ENCODE measurements at regions of chr3 and their contacts with region 1.

Region 1: DNA sequence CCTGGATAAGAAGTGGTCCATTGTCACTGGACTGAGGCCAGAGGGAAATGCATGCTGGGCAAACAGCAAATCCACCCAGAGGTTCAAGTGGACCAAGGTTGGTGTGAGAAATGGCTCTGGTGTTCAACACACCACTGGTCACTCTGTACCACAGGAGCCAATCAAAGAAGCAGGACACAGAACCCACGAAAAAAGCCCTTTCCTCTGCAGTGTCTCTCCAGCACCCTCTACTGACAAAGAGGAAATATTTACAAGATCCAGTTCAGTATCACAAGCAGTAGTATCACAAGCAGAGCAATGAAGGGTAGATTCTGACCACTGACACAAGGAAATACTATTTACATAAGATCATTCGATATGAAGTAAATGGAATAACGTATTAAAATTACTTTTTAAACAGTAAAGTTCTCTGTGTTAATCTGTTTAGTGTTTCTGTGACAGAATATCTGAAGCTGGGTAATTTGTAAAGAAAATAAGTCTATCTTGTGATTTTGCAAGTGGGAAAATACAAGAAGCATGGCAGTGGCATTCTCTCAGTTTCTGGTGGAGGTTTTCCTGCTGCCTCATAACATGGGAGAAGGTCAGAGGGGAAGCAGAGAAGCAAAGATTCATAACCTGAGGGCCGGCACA is 390.7 kb downstream of the EFHB start:
- DNase-seq: peak; percentile 73
- H3K4me3 ChIP-seq: peak overlapping the region; percentile 5
- H3K27ac ChIP-seq: peak overlapping the region; percentile 95
- H3K4me1 ChIP-seq: peaks cover 56% of the 10 kb centered on the region
- CTCF ChIP-seq: peak; percentile 97

Region 2: DNA sequence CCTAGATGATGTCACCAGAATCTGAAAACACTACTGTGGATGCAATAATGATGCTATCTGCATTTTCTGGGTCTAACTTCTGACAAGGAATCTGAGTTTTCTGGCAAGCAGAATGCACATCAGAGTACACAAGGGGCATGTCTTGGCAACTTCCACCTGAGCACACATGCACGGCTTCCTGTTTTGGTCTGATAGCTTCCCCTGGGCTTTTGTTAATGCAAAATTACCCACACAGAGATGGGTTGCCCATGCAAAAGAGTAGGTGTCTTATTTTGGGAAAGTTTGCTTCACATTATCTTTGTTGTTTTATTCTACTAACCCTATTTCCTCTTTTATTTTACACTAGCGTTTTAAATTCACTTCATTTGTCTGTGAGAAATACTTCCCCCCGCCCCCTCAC is 1044.0 kb before region 1 on chr3:
- CTCF ChIA-PET with region 1: no interaction called
- POLR2A ChIA-PET with region 1: no interaction called
- intact Hi-C with region 1: no loop called
- DNase-seq: peak; percentile 90
- H3K4me3 ChIP-seq: peak overlapping the region; percentile 40
- H3K27ac ChIP-seq: peak overlapping the region; percentile 75
- H3K4me1 ChIP-seq: peaks cover 35% of the 10 kb centered on the region
- CTCF ChIP-seq: no peak

Region 3: DNA sequence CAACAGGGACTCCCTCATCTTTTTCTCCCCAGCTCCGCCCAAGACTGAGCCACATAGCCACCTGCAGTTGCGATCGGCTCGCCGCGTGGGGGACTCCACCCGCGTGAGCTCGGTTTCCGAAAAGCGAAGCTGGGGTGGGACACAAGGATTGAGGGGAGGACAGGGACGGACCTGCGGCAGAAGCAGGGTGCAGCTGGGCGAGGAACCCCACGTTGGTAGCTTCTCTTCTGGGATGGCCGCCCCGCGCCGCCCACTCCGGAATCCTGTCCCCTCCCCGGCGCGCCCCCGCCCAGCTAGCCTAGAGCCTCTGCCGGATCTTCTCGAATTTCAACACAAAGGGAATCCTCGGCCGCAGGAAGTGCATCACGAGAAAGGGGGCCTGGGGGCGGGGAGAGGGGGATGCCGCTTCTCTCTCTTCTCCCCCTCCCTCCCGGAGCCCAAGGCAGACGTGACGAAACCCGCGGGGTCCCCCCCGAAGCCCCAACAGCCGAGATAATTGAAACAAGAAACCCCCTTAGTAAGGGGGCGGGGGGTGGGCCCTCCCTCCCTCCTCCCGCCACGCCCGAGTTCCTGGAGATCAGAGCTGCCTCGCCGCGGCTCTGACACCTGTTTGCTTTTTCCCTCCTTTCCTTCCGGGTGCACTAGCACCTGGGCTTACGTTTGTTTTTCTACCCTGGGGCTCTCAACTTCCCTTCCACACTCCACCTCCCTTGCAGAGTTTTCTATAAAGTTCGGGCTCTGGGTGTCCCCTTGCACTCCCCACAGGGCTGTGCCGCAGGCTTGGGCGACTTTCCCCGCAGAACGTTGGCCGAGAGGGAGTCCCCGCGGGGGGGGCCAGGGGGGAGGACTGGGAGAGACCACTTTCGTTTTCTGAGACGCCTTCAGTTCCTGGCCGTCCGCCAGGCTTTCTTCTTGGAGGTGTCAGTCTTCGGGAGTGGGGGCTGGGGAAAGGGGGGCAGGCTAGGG is 396.4 kb before region 1 on chr3:
- CTCF ChIA-PET with region 1: interaction called, 3 read pairs
- POLR2A ChIA-PET with region 1: interaction called, 6 read pairs
- intact Hi-C with region 1: loop called (anchors 2 kb)
- DNase-seq: peak; percentile 91
- H3K4me3 ChIP-seq: peak overlapping the region; percentile 72
- H3K27ac ChIP-seq: peak overlapping the region; percentile 68
- H3K4me1 ChIP-seq: peaks cover 11% of the 10 kb centered on the region
- CTCF ChIP-seq: peak; percentile 76

Region 4: DNA sequence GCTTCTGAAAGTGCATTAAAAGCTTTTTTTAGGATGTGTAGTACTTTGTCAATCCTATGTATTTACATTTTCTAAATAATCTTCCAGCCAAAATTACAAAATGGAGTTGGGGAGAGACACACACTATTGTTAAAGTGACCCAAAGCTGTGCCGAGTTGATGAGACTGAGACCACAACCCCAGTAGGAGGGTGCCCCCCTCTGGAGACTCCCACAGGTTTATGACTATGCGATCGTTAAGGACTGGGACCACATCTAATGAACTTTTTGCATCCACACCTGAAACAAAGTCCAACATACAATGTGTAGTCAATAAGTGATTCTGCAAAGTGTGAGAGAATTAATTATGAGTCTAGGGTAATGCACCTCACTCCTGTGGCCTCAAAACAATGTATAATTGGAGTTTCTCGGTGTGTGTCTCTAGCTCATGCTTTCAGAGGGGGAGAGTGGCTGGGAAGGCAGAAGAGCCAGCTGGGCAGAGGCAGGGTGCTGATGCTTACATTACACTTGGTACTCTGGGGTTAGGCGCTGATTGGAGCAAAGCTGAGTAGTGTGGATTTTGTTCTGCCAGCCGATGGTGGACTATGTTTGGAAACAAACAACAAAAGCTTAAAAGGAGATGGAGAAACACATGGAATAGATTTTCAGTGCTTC is 292.2 kb before region 1 on chr3:
- CTCF ChIA-PET with region 1: no interaction called
- POLR2A ChIA-PET with region 1: no interaction called
- intact Hi-C with region 1: loop called (anchors 10 kb)
- DNase-seq: peak; percentile 24
- H3K4me3 ChIP-seq: no peak overlapping the region
- H3K27ac ChIP-seq: no peak overlapping the region
- H3K4me1 ChIP-seq: peaks cover 7% of the 10 kb centered on the region
- CTCF ChIP-seq: peak; percentile 69

Region 5: GRCh38 chr3:19485267-19485666 is 58.1 kb before region 1 on chr3:
- CTCF ChIA-PET with region 1: interaction called, 4 read pairs
- POLR2A ChIA-PET with region 1: interaction called, 4 read pairs
- intact Hi-C with region 1: loop called (anchors 5 kb)
- DNase-seq: no peak
- H3K4me3 ChIP-seq: no peak overlapping the region
- H3K27ac ChIP-seq: no peak overlapping the region
- H3K4me1 ChIP-seq: no peaks in the 10 kb centered on the region
- CTCF ChIP-seq: no peak

Region 6: DNA sequence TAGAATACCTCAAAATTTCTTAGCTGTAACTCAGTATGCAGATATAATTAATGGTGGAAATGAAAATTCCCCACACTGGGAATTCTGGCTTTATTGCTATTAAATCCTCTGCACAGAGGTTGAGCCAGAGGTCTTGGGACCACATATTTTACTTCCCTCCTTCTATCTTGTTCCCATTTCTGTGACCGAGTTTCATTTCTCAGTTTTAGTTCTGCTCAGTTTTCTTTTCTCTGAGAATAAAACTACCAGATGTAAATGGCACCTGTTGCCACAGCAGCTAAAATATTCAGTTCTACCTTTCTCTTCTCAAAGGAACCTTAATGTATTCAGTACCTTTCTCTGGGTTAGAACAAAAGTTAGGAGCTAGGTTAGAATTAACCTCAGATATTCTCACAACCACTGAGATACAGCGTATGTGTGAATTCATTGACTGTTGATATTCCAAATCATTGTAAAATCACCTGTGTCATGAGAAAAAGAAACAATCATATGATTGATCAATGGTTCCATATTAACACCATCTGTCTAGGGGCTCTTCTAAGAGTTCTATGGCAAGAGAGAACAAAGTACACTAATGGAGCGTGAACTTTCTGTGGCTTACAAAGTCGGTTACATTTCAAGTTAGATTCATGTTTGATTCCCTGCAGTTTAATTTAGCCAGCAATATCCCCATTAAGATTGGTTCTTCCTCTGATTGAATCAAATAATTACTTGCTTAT is 16.6 kb after region 1 on chr3:
- CTCF ChIA-PET with region 1: interaction called, 7 read pairs
- POLR2A ChIA-PET with region 1: interaction called, 17 read pairs
- intact Hi-C with region 1: loop called (anchors 2 kb)
- DNase-seq: peak; percentile 68
- H3K4me3 ChIP-seq: peak overlapping the region; percentile 37
- H3K27ac ChIP-seq: peak overlapping the region; percentile 81
- H3K4me1 ChIP-seq: peaks cover 23% of the 10 kb centered on the region
- CTCF ChIP-seq: no peak

Region 7: DNA sequence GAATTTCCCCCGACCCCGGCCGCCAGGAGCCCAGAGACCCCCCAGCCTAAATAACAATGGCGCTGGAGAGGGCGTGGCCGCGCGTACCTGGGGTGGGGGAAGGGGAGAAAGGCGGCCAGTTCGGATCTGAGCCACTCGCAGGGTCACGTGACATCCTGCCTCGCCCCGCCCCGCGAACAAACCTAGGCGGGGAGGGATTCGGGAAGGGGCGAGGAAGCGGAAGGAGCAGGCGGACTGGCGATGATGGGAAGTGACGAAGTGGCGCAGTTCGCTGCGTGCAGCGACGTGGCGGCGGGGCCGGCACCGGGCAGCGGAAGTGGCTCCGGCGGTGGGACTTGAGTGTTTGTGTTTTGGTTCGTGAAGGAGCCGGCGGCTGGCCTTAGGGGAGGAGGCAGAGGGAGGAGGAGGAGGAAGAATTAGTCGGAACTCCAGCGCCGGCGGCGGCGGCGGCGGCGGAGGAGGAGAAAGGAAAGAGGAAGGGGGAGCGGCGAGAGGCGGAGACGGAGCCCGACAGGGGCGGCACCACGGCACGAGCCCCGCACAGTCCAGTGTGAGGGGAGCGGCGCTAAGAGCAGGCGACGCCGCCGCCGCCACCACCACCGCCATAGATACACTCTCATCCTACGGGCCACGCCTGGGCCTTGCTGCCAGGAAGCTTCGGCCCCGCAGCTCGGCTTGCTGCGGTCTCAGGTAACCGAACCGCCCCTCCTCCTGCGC is 403.7 kb after region 1 on chr3 and contains the start of gene RAB5A:
- CTCF ChIA-PET with region 1: no interaction called
- POLR2A ChIA-PET with region 1: no interaction called
- intact Hi-C with region 1: loop called (anchors 10 kb)
- DNase-seq: peak; percentile 97
- H3K4me3 ChIP-seq: peak within 1 kb of the TSS; percentile 91
- H3K27ac ChIP-seq: peak within 1 kb of the TSS; percentile 73
- H3K4me1 ChIP-seq: peaks cover 30% of the 10 kb centered on the region
- CTCF ChIP-seq: no peak
- total RNA-seq, gene RAB5A: 24.5 and 26.1 TPM in 2 replicates

Region 8: DNA sequence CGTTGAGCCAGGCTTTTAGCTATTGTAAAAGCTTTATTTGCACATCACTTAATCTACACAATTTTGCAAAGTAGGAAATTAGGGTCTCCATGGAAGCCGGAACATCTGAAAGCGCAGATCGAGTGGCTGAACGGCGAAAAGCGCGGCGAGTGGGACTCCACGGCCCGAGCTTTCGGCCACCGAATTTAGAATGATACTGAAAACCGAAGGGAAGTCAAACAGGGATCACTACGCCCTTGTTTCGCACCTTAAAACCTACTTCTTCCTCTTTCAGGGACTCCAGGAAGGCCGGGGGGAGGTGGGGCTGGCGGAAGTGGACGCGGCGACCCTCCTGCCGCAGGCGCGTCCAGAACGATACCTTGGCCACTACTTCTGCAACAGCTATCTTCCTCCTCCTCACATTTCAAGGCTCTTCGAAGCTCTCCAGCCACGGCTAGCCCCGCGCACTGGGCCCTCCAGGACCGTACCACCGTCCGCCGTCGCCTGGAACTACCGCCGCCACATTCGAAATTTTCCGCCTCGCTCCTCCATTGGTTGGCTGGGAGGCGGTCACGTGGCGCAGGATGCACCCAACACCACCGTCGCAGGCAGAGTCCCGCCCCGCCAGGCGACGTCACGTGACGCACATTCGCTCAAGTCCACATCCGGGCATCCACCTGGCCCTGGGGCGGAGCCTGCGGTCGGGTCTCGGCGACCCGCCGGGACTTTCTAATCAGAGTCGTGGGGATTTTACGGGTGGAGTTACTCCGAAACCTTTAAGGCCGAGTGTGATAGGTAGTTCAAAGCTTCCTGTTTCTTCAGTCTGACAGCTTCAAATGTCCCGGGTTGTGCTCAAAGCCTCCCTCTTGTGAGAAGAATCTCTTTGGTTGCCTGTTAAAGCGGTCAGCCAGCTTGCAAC is 642.6 kb after region 1 on chr3 and contains the start of gene SGO1:
- CTCF ChIA-PET with region 1: no interaction called
- POLR2A ChIA-PET with region 1: interaction called, 4 read pairs
- intact Hi-C with region 1: loop called (anchors 5 kb)
- DNase-seq: peak; percentile 99
- H3K4me3 ChIP-seq: peak within 1 kb of the TSS; percentile 87
- H3K27ac ChIP-seq: peak within 1 kb of the TSS; percentile 93
- H3K4me1 ChIP-seq: peaks cover 21% of the 10 kb centered on the region
- CTCF ChIP-seq: no peak
- total RNA-seq, gene SGO1: 21.4 and 27.6 TPM in 2 replicates